Endothelial cell of umbilical vein (primary cell): ENCODE measurements at regions of chr12 and their contacts with region 1.

Region 1: DNA sequence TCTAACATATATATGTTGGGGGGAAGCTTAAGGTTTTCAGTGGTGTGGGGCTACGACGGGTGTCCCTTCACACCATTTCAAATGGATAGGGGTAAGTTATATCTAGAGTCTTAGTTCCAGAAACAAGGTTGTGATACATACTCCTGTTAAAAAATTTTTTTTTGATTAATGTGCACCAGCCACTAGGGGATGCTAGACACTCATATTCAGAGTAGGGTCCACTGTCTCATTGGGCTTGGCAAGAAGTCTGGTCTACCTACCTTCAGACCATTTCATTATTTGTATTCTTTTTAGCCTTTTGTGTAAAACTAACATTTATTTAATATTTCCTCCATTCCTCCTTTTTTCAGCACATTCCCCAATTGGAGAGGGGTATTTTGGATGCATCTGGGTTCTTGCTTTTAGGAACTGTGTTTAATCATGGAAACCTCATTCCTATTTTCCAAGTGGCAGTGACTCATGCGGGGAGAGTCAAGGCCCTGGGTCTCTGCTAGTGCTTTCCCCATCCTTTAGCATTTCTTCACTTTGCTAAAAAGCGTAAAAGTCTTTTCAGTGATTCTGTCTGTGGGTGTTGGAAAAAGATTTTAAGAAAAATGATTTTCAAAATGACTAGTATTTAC is 33.4 kb downstream of the ANO4 start:
- DNase-seq: peak; percentile 24
- H3K4me3 ChIP-seq: no peak overlapping the region
- H3K27ac ChIP-seq: no peak overlapping the region
- H3K4me1 ChIP-seq: no peaks in the 10 kb centered on the region
- H3K27me3 ChIP-seq: no peaks in the 10 kb centered on the region
- CTCF ChIP-seq: peak; percentile 26 to 42
- POLR2A ChIP-seq: no peak

Region 2: DNA sequence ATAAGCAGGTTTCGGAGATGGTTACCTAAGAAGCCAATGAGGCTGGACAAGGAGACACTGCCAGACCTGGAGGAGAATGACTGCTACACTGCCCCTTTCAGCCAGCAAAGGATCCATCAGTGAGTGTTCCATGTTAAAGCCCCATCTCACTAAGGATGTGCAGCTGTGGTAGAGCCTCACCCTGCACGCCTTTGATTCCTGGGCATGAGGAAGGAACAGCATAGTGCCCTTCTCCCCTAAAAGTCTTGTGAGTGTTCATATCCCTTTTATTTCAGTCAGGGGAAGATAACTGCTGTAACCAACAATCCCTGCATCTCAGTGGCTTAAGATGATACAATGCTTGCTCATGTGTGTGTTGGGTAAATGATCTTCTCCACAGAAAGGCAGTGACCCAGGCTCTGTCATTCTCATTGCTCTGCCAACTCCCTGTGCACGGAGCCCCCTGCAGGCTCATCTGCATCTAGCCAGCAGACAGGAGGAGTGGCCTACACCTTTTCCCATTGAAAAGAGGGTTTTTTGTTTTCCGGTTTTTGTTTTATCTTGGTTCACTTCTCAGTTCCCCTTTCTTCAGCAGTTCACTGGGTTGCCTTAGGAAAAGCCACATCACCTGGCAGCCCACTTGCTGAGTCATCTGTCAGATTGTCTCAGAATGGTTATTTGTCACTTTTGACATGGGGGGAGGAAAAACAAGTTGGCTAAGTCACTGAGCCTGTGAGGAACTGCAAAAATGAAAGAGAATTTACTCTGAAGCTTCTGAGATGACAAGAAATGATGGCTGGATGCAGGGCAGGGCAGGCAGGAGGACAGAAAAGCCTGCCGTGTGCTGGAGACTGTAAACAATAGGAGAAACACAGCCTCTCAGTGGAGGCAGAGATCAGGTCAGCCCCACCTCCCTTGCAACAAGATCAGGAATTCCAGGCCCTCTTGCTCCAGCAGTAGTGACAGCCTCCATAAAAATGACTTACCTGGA is 159.8 kb after region 1 on chr12:
- CTCF ChIA-PET with region 1: no interaction called
- POLR2A ChIA-PET with region 1: no interaction called
- dilution Hi-C with region 1: no loop called
- intact Hi-C with region 1: loop called (anchors 5 kb)
- DNase-seq: peak; percentile 51
- H3K4me3 ChIP-seq: no peak overlapping the region
- H3K27ac ChIP-seq: no peak overlapping the region
- H3K4me1 ChIP-seq: no peaks in the 10 kb centered on the region
- H3K27me3 ChIP-seq: no peaks in the 10 kb centered on the region
- CTCF ChIP-seq: peak; percentile 18 to 28
- POLR2A ChIP-seq: no peak

Region 3: DNA sequence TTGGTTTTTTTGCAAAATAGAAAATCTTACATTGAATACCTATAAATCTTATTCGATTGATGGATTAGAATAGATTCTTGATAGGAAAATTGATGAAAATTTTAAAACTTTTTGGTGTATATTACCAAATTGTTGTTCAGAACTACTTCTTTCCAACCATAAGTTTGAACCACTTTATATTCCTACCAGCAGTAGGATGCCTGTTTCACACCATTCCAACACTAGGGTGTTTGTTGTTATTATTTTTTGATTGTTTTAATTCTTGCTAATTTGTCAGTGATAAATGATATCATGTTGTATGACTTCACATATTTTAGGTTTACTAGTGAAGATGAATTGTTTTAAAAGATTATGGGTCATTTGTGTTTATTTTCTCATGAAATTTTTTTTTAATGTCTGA is 495.2 kb after region 1 on chr12:
- CTCF ChIA-PET with region 1: interaction called, 71 read pairs
- POLR2A ChIA-PET with region 1: no interaction called
- dilution Hi-C with region 1: no loop called
- intact Hi-C with region 1: no loop called
- DNase-seq: no peak
- H3K4me3 ChIP-seq: no peak overlapping the region
- H3K27ac ChIP-seq: no peak overlapping the region
- H3K4me1 ChIP-seq: no peaks in the 10 kb centered on the region
- H3K27me3 ChIP-seq: no peaks in the 10 kb centered on the region
- CTCF ChIP-seq: no peak
- POLR2A ChIP-seq: no peak